Posterior cingulate gyrus (tissue), 11 donors: ENCODE measurements at regions of chr12 and their contacts with region 1.

Region 1: DNA sequence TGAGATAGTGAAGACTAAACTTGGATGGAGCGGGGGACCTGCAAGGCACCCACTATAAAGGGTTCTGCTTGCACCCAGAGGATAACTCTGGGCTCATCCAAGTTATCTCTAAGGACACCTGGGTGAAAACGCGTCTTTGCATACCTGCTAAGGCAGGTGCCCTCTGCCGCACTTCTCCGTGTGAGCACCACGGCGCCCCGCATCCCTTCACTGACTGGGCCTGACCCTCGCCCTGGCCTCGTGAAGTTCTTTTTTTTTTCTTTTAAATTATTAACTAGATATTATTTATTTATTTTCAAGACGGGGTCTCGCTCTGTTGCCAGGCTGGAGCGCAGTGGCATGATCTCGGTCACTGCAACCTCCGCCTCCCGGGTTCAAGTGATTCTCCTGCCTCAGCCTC is 20.0 kb upstream of the APOF start:
- DNase-seq: no peak

Region 2: GRCh38 chr12:56420411-56420810 is 37.8 kb after region 1 on chr12:
- intact Hi-C with region 1: loop called (anchors 5 kb)
- DNase-seq: peak in 1 of 10 donors; percentile 52